Heart right ventricle (tissue), 16 donors: ENCODE measurements at regions of chr5 and their contacts with region 1.

Region 1: GRCh38 chr5:902129-902916 is 9.6 kb downstream of the TRIP13 start:
- DNase-seq: no peak
- ATAC-seq: peak in 2 of 8 donors; percentile 22 to 53
- H3K4me3 ChIP-seq: no peak overlapping the region
- H3K27ac ChIP-seq: no peak overlapping the region
- H3K4me1 ChIP-seq: peaks cover 0 to 6% (median 0%) of the 10 kb centered on the region in 9 donors
- H3K27me3 ChIP-seq: no peaks in the 10 kb centered on the region
- CTCF ChIP-seq: no peak

Region 2: GRCh38 chr5:442335-443238 is 459.7 kb before region 1 on chr5 and contains the start of gene EXOC3:
- intact Hi-C with region 1: loop called in 1 of 10 experiments (anchors 10 kb)
- DNase-seq: peak; percentile 63 to 80
- ATAC-seq: peak; percentile 89 to 96 (median 94)
- H3K4me3 ChIP-seq: peak within 1 kb of the TSS; percentile 62 to 99 (median 87)
- H3K27ac ChIP-seq: peak within 1 kb of the TSS; percentile 64 to 95 (median 87)
- H3K4me1 ChIP-seq: peaks cover 3 to 44% (median 21%) of the 10 kb centered on the region in 9 donors
- H3K27me3 ChIP-seq: peaks cover 0 to 1% (median 0%) of the 10 kb centered on the region in 7 donors
- CTCF ChIP-seq: no peak
- total RNA-seq, gene EXOC3: 35.9 to 44.7 (median 41.0) TPM

Region 3: DNA sequence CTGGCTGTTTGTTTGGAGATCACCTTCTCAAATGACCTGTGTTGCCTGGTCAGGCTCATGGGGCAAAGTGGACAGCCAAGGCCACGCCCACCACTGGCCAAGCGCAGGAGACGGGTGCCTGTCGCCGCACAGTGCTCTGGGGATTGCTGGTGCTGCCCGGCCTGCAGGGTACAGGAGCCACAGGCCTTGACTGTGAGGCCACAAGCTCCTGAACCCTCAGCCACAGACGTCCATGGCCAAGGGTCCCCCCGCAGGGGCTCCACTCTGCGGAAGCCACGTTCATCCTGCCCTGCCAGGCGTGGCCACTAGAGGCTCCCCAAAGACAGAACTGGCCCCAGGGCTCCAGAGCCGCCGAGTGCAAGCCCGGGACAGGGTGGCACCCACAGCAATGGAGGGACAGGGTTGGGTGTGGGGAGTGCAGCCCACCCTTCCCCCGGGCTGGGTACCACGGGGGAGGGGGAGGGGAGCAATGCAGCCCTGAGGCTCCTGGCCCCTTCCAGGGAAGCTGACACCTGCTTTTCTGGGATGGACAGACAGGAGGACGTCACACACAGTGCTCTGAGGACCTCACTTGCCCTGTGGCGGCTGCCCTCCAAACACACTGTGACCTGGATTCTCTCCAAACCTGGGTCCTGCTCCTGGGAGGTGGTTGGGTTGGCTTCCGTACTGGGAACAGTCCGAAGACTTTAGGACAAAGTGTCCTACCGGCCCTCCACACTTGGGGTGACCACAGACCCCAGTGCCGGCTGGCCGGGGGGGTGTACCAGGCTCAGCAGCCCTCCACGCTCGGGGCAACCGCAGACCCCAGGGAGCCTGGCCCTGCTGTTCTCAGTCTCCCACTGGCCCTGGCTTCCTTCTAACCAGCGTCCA is 230.6 kb before region 1 on chr5:
- intact Hi-C with region 1: loop called (anchors 2 to 5 kb)
- DNase-seq: peak; percentile 75 to 79
- ATAC-seq: peak; percentile 71 to 88 (median 80)
- H3K4me3 ChIP-seq: peak overlapping the region in 4 of 10 donors; percentile 8 to 40 (median 28)
- H3K27ac ChIP-seq: peak overlapping the region in 6 of 10 donors; percentile 29 to 76 (median 56)
- H3K4me1 ChIP-seq: peaks cover 25 to 45% (median 37%) of the 10 kb centered on the region in 9 donors
- H3K27me3 ChIP-seq: peaks cover 0 to 25% (median 0%) of the 10 kb centered on the region in 7 donors
- CTCF ChIP-seq: peak; percentile 88 to 98 (median 95)

Region 4: DNA sequence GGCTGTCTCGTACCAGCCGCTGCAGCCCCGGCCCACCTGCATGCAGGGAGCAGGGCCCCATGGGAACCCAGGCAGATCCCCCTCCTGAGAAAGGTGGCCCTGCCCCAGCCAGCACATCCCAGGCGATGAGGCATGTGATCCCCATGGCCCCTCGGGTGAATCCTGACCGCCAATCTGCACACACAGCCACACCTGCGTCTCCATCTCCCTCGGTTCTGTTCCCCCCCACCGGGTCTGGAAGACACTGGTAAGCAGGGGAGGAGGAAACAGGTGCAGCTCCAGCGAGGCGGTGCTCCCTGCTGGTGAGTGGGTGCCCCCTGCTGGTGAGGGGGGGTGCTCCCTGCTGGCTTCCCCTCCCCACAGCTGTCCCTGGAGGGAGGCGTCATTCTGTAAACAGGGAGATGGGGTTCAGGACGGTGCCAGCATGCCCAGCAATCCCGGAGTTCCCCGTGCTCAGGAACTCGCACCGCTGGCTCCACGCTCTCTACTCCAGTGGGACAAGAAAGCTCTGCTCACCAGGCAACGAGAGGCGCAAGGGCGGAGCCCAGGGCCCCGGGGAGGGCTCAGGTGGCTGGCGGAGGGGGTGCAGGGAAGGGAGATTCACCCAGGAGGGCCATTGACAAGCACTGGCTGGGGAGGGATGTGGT is 238.0 kb after region 1 on chr5:
- intact Hi-C with region 1: no loop called
- DNase-seq: peak; percentile 86 to 87
- ATAC-seq: peak; percentile 77 to 91 (median 87)
- H3K4me3 ChIP-seq: no peak overlapping the region
- H3K27ac ChIP-seq: no peak overlapping the region
- H3K4me1 ChIP-seq: peaks cover 0 to 33% (median 21%) of the 10 kb centered on the region in 9 donors
- H3K27me3 ChIP-seq: no peaks in the 10 kb centered on the region
- CTCF ChIP-seq: peak; percentile 85 to 97 (median 94)